ENCODE measurements at regions of chr1 and their contacts with region 1.

Region 1: GRCh38 chr1:158203693-158204457 is 23.2 kb downstream of the CD1D start:
- DNase-seq: peak; percentile 23
- H3K4me3 Mint-ChIP-seq: no peak overlapping the region
- H3K27ac Mint-ChIP-seq: no peak overlapping the region
- H3K4me1 Mint-ChIP-seq: peaks cover 4% of the 10 kb centered on the region
- H3K27me3 Mint-ChIP-seq: peaks cover 25% of the 10 kb centered on the region

Region 2: GRCh38 chr1:158257888-158258287 is 54.0 kb after region 1 on chr1:
- CTCF ChIA-PET with region 1: no interaction called
- intact Hi-C with region 1: no loop called
- DNase-seq: no peak
- H3K4me3 Mint-ChIP-seq: no peak overlapping the region
- H3K27ac Mint-ChIP-seq: no peak overlapping the region
- H3K4me1 Mint-ChIP-seq: no peaks in the 10 kb centered on the region
- H3K27me3 Mint-ChIP-seq: peaks cover 32% of the 10 kb centered on the region

Region 3: DNA sequence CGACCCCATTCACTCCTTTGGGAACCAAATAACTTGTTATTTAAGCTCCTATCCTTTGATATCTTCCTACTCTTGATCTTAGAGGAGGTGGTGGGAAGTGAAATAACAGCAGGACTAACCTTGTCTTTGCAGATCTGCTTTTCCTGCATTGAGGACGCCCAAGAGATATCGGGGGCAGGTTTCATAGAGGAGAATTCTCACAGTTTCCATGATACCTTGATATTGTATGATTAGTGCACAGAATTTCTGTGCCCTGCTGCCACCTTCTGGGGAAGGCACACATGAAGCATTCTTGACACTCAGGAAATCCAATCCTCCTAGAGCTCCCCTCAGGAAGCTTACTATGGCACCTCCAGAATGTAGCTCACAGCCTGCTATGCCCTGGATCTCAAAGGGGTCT is 125.9 kb after region 1 on chr1:
- CTCF ChIA-PET with region 1: interaction called, 17 read pairs
- intact Hi-C with region 1: loop called (anchors 1 kb)
- DNase-seq: peak; percentile 17
- H3K4me3 Mint-ChIP-seq: no peak overlapping the region
- H3K27ac Mint-ChIP-seq: no peak overlapping the region
- H3K4me1 Mint-ChIP-seq: no peaks in the 10 kb centered on the region
- H3K27me3 Mint-ChIP-seq: peaks cover 18% of the 10 kb centered on the region

Region 4: GRCh38 chr1:158400871-158401270 is 197.0 kb after region 1 on chr1:
- CTCF ChIA-PET with region 1: no interaction called
- intact Hi-C with region 1: loop called (anchors 10 kb)
- DNase-seq: no peak
- H3K4me3 Mint-ChIP-seq: no peak overlapping the region
- H3K27ac Mint-ChIP-seq: no peak overlapping the region
- H3K4me1 Mint-ChIP-seq: peaks cover 5% of the 10 kb centered on the region
- H3K27me3 Mint-ChIP-seq: peaks cover 21% of the 10 kb centered on the region

Region 5: DNA sequence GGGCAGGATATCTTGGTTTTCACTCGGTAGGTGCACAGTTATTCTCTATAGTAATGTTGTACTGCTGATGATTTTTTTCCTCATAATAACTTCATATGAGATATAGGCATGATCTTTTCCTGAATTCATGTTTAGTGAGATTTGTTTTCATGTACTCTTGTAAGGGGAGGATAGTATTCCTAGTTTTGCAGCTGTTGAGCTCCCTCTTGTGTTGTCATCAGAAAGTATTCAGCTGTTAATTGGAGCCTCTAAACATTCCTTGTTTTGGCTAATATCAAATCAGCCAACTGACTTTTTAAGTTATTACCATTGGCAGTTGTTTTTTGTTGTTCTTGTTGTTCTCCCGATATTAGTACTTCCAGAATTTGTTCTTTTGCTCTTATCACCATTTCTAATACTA is 292.5 kb after region 1 on chr1:
- CTCF ChIA-PET with region 1: interaction called, 7 read pairs
- intact Hi-C with region 1: loop called (anchors 10 kb)
- DNase-seq: no peak
- H3K4me3 Mint-ChIP-seq: no peak overlapping the region
- H3K27ac Mint-ChIP-seq: no peak overlapping the region
- H3K4me1 Mint-ChIP-seq: no peaks in the 10 kb centered on the region
- H3K27me3 Mint-ChIP-seq: peaks cover 11% of the 10 kb centered on the region

Region 6: GRCh38 chr1:158527190-158527815 is 323.4 kb after region 1 on chr1:
- CTCF ChIA-PET with region 1: interaction called, 4 read pairs
- intact Hi-C with region 1: loop called (anchors 1 kb)
- DNase-seq: no peak
- H3K4me3 Mint-ChIP-seq: no peak overlapping the region
- H3K27ac Mint-ChIP-seq: no peak overlapping the region
- H3K4me1 Mint-ChIP-seq: no peaks in the 10 kb centered on the region
- H3K27me3 Mint-ChIP-seq: peaks cover 31% of the 10 kb centered on the region

Measured in activated naive CD4-positive, alpha-beta T cell treated with anti-CD3 and anti-CD28 coated beads for 36 hours (primary cell).